GM12878 (cell line): ENCODE measurements at regions of chr20 and their contacts with region 1.

Region 1: GRCh38 chr20:38221119-38221589 is 39.4 kb downstream of the KIAA1755 start:
- DNase-seq: no peak
- ATAC-seq: peak; percentile 92
- H3K4me3 ChIP-seq: no peak overlapping the region
- H3K27ac ChIP-seq: no peak overlapping the region
- H3K4me1 ChIP-seq: no peaks in the 10 kb centered on the region
- H3K27me3 ChIP-seq: no peaks in the 10 kb centered on the region; a peak in 1 of 4 replicates
- CTCF ChIP-seq: peak; percentile 85 to 95 (median 88)
- EP300 ChIP-seq: no peak
- POLR2A ChIP-seq: no peak
- RAD21 ChIP-seq: peak; percentile 88

Region 2: GRCh38 chr20:37564388-37565133 is 656.6 kb before region 1 on chr20:
- CTCF ChIA-PET with region 1: interaction called, 10 read pairs
- POLR2A ChIA-PET with region 1: no interaction called
- RAD21 ChIA-PET with region 1: interaction called, 7 read pairs
- SMC1A ChIA-PET with region 1: interaction called, 7 read pairs
- in situ Hi-C with region 1: loop called (anchors 10 kb)
- intact Hi-C with region 1: loop called (anchors 5 kb)
- DNase-seq: no peak
- ATAC-seq: peak; percentile 86
- H3K4me3 ChIP-seq: no peak overlapping the region
- H3K27ac ChIP-seq: no peak overlapping the region
- H3K4me1 ChIP-seq: no peaks in the 10 kb centered on the region
- H3K27me3 ChIP-seq: peaks cover 2 to 12% of the 10 kb centered on the region in 2 experiments
- CTCF ChIP-seq: peak; percentile 87 to 95 (median 92)
- EP300 ChIP-seq: no peak
- POLR2A ChIP-seq: no peak
- RAD21 ChIP-seq: peak; percentile 96

Region 3: DNA sequence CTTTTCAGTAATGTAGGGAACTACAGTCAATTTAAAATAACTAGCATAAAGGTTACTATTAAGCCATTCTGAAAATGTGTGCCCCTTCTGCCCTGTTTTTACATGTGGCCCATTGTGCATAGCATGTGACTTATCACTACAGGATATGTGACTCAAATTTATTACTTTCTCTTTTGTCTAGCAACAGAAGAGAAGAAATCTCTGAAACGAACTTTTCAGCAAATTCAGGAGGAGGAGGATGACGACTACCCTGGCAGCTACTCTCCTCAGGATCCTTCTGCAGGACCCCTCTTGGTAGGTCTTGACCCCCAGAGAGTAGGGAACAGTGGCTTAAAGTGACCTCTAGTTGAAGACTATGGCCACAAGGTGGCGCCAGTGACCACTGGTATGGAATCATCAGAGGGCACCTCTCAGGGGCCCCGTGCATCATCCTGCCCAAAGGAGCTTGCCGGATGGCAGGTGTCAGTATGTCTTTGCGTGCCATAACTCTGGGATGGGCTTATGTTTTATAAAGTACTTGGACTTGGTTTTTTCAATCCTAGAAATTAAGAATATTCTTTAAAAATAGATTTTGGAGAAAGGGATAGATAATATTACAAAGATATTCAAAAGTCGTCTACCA is 163.7 kb before region 1 on chr20:
- CTCF ChIA-PET with region 1: interaction called, 404 read pairs
- POLR2A ChIA-PET with region 1: no interaction called
- RAD21 ChIA-PET with region 1: interaction called, 55 read pairs
- SMC1A ChIA-PET with region 1: interaction called, 128 read pairs
- in situ Hi-C with region 1: no loop called
- intact Hi-C with region 1: loop called (anchors 1 kb)
- DNase-seq: no peak
- ATAC-seq: peak; percentile 96
- H3K4me3 ChIP-seq: no peak overlapping the region
- H3K27ac ChIP-seq: no peak overlapping the region
- H3K4me1 ChIP-seq: peaks cover 19% of the 10 kb centered on the region
- H3K27me3 ChIP-seq: no peaks in the 10 kb centered on the region
- CTCF ChIP-seq: peak; percentile 79 to 87 (median 84)
- EP300 ChIP-seq: no peak
- POLR2A ChIP-seq: no peak
- RAD21 ChIP-seq: peak; percentile 91

Region 4: GRCh38 chr20:38113401-38114325 is 107.5 kb before region 1 on chr20:
- CTCF ChIA-PET with region 1: interaction called, 69 read pairs
- POLR2A ChIA-PET with region 1: no interaction called
- RAD21 ChIA-PET with region 1: interaction called, 27 read pairs
- SMC1A ChIA-PET with region 1: interaction called, 21 read pairs
- in situ Hi-C with region 1: no loop called
- intact Hi-C with region 1: loop called (anchors 1 kb)
- DNase-seq: no peak
- ATAC-seq: peak; percentile 78
- H3K4me3 ChIP-seq: no peak overlapping the region
- H3K27ac ChIP-seq: no peak overlapping the region
- H3K4me1 ChIP-seq: 0 out of 2 replicates have a peak, but pooled peaks cover 3% of the 10 kb centered on the region
- H3K27me3 ChIP-seq: no peaks in the 10 kb centered on the region
- CTCF ChIP-seq: peak; percentile 18 to 32 (median 25); a peak in 4 of 6 replicates
- EP300 ChIP-seq: no peak
- POLR2A ChIP-seq: no peak
- RAD21 ChIP-seq: peak; percentile 54

Region 5: GRCh38 chr20:38181207-38181693 is 39.9 kb before region 1 on chr20:
- CTCF ChIA-PET with region 1: interaction called, 12 read pairs
- POLR2A ChIA-PET with region 1: no interaction called
- RAD21 ChIA-PET with region 1: interaction called, 4 read pairs
- SMC1A ChIA-PET with region 1: interaction called, 4 read pairs
- in situ Hi-C with region 1: no loop called
- intact Hi-C with region 1: no loop called
- DNase-seq: peak; percentile 62
- ATAC-seq: peak; percentile 97
- H3K4me3 ChIP-seq: no peak overlapping the region
- H3K27ac ChIP-seq: no peak overlapping the region
- H3K4me1 ChIP-seq: peaks cover 6% of the 10 kb centered on the region
- H3K27me3 ChIP-seq: no peaks in the 10 kb centered on the region; a peak in 1 of 4 replicates
- CTCF ChIP-seq: no peak
- EP300 ChIP-seq: peak in 1 of 2 experiments; percentile 33; a peak in 1 of 4 replicates
- POLR2A ChIP-seq: no peak
- RAD21 ChIP-seq: no peak

Region 6: DNA sequence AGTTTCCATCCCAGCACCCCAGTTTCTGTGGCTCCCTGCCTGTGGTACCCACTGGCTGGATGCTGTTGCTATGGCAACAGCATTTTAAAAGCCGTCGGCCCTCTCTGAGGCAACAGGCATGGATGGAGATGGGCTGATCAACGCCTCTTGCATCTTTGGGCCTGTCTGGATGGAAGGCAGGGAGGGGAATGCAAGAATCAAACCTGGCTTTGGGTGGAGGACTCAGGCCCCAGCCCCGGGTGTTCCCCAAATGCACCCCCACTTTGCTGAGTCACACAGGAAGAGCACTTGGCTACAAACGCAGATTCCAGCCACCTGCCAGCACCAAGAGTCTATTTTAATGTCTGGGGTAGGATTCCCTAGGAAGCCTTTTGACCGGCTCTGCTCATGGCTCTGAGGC is 10.4 kb before region 1 on chr20:
- CTCF ChIA-PET with region 1: interaction called, 35 read pairs
- POLR2A ChIA-PET with region 1: no interaction called
- RAD21 ChIA-PET with region 1: interaction called, 3 read pairs
- SMC1A ChIA-PET with region 1: interaction called, 11 read pairs
- in situ Hi-C with region 1: no loop called
- intact Hi-C with region 1: no loop called
- DNase-seq: no peak
- ATAC-seq: no peak
- H3K4me3 ChIP-seq: no peak overlapping the region
- H3K27ac ChIP-seq: no peak overlapping the region
- H3K4me1 ChIP-seq: no peaks in the 10 kb centered on the region
- H3K27me3 ChIP-seq: no peaks in the 10 kb centered on the region; a peak in 1 of 4 replicates
- CTCF ChIP-seq: no peak
- EP300 ChIP-seq: no peak
- POLR2A ChIP-seq: no peak
- RAD21 ChIP-seq: no peak